Breast epithelium (tissue), 4 donors: ENCODE measurements at regions of chr19 and their contacts with region 1.

Region 1: DNA sequence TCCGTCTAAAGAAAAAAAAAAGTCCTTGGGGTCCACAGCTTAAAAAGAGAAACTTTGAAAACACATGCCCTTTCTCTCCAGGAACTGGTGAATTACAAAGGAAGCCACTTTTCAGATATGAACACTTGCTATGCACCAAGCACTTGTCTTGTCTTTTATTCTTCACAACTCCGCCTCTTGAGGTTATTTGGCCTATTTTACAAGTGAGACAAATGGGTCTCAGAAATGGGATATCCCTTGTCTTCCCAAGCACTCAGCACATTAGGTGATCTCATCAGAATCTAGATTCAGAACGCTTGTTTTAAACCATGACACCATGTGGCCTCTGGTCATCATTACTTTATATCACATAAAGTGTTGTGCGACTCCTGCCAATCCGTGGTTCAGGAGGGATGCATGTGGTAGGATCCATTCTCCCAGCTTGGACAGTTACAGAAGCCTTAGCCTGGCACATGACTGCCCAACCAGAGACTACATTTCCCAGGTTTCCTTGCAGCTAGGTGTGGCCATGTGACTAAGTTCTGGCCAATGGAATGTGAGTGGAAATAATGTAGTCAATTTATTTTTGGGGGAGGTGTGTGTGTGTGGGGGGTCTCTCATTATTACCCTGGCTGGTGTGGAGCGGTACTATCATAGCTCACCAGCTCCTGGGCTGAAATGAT is 13.9 kb downstream of the TSKS start:
- DNase-seq: no peak
- H3K4me3 ChIP-seq: no peak overlapping the region
- H3K27ac ChIP-seq: no peak overlapping the region
- H3K4me1 ChIP-seq: no peaks in the 10 kb centered on the region
- H3K27me3 ChIP-seq: no peaks in the 10 kb centered on the region
- CTCF ChIP-seq: no peak
- POLR2A ChIP-seq: no peak

Region 2: GRCh38 chr19:49421039-49421877 is 327.9 kb before region 1 on chr19:
- intact Hi-C with region 1: no loop called
- DNase-seq: peak in 1 of 2 donors; percentile 54
- H3K4me3 ChIP-seq: peak overlapping the region in 2 of 3 donors; percentile 40 to 65
- H3K27ac ChIP-seq: no peak overlapping the region
- H3K4me1 ChIP-seq: peaks cover 0 to 8% of the 10 kb centered on the region in 2 donors
- H3K27me3 ChIP-seq: peaks cover 11 to 67% of the 10 kb centered on the region in 2 donors
- CTCF ChIP-seq: no peak
- POLR2A ChIP-seq: no peak

Region 3: GRCh38 chr19:49798574-49798973 is 49.4 kb after region 1 on chr19:
- intact Hi-C with region 1: loop called (anchors 1 kb)
- DNase-seq: no peak
- H3K4me3 ChIP-seq: no peak overlapping the region
- H3K27ac ChIP-seq: no peak overlapping the region
- H3K4me1 ChIP-seq: no peaks in the 10 kb centered on the region
- H3K27me3 ChIP-seq: no peaks in the 10 kb centered on the region
- CTCF ChIP-seq: no peak
- POLR2A ChIP-seq: no peak